CD4-positive, alpha-beta T cell (primary cell): ENCODE measurements at regions of chr2 and their contacts with region 1.

Region 1: GRCh38 chr2:9984217-9984739 is 32.8 kb downstream of the GRHL1 start:
- DNase-seq: peak in 4 of 14 experiments; percentile 24 to 81 (median 71)
- ATAC-seq: peak; percentile 90
- H3K4me3 ChIP-seq: no peak overlapping the region
- H3K4me3 Mint-ChIP-seq: no peak overlapping the region
- H3K27ac ChIP-seq: no peak overlapping the region
- H3K27ac Mint-ChIP-seq: no peak overlapping the region
- H3K4me1 ChIP-seq: peaks cover 7% of the 10 kb centered on the region
- H3K4me1 Mint-ChIP-seq: peaks cover 16% of the 10 kb centered on the region
- H3K27me3 ChIP-seq: no peaks in the 10 kb centered on the region
- H3K27me3 Mint-ChIP-seq: peaks cover 9% of the 10 kb centered on the region
- CTCF ChIP-seq: peak; percentile 83

Region 2: GRCh38 chr2:9961013-9961412 is 23.3 kb before region 1 on chr2:
- CTCF ChIA-PET with region 1: interaction called, 10 read pairs
- POLR2A ChIA-PET with region 1: no interaction called
- intact Hi-C with region 1: no loop called
- DNase-seq: no peak
- ATAC-seq: no peak
- H3K4me3 ChIP-seq: no peak overlapping the region
- H3K4me3 Mint-ChIP-seq: no peak overlapping the region
- H3K27ac ChIP-seq: no peak overlapping the region
- H3K27ac Mint-ChIP-seq: no peak overlapping the region
- H3K4me1 ChIP-seq: peaks cover 3% of the 10 kb centered on the region
- H3K4me1 Mint-ChIP-seq: peaks cover 11% of the 10 kb centered on the region
- H3K27me3 ChIP-seq: no peaks in the 10 kb centered on the region
- H3K27me3 Mint-ChIP-seq: peaks cover 13% of the 10 kb centered on the region
- CTCF ChIP-seq: no peak

Region 3: GRCh38 chr2:9970200-9971044 is 13.9 kb before region 1 on chr2:
- CTCF ChIA-PET with region 1: interaction called, 10 read pairs
- POLR2A ChIA-PET with region 1: interaction called, 4 read pairs
- intact Hi-C with region 1: no loop called
- DNase-seq: no peak
- ATAC-seq: no peak
- H3K4me3 ChIP-seq: no peak overlapping the region
- H3K4me3 Mint-ChIP-seq: no peak overlapping the region
- H3K27ac ChIP-seq: no peak overlapping the region
- H3K27ac Mint-ChIP-seq: no peak overlapping the region
- H3K4me1 ChIP-seq: peaks cover 1% of the 10 kb centered on the region
- H3K4me1 Mint-ChIP-seq: peaks cover 2% of the 10 kb centered on the region
- H3K27me3 ChIP-seq: no peaks in the 10 kb centered on the region
- H3K27me3 Mint-ChIP-seq: no peaks in the 10 kb centered on the region
- CTCF ChIP-seq: no peak

Region 4: GRCh38 chr2:11175293-11175795 is 1191.1 kb after region 1 on chr2:
- CTCF ChIA-PET with region 1: no interaction called
- POLR2A ChIA-PET with region 1: no interaction called
- intact Hi-C with region 1: no loop called
- DNase-seq: no peak
- ATAC-seq: no peak
- H3K4me3 ChIP-seq: no peak overlapping the region
- H3K4me3 Mint-ChIP-seq: no peak overlapping the region
- H3K27ac ChIP-seq: no peak overlapping the region
- H3K27ac Mint-ChIP-seq: peak overlapping the region; percentile 21
- H3K4me1 ChIP-seq: peaks cover 6% of the 10 kb centered on the region
- H3K4me1 Mint-ChIP-seq: peaks cover 12% of the 10 kb centered on the region
- H3K27me3 ChIP-seq: no peaks in the 10 kb centered on the region
- H3K27me3 Mint-ChIP-seq: no peaks in the 10 kb centered on the region
- CTCF ChIP-seq: no peak